ENCODE measurements at regions of chr5 and their contacts with region 1.

Region 1: GRCh38 chr5:11046160-11046559 is 285.1 kb upstream of the DAP start:
- DNase-seq: peak in 1 of 2 experiments; percentile 50
- H3K4me3 ChIP-seq: no peak overlapping the region
- H3K27ac ChIP-seq: no peak overlapping the region
- H3K4me1 ChIP-seq: peaks cover 0 to 3% (median 0%) of the 10 kb centered on the region in 4 experiments; a peak in 1 of 7 replicates
- H3K27me3 ChIP-seq: no peaks in the 10 kb centered on the region
- CTCF ChIP-seq: peak; percentile 27 to 52 (median 48)
- EP300 ChIP-seq: no peak
- POLR2A ChIP-seq: no peak
- RAD21 ChIP-seq: peak; percentile 59 to 64; a peak in 3 of 4 replicates

Region 2: GRCh38 chr5:11062397-11062796 is 16.2 kb after region 1 on chr5:
- CTCF ChIA-PET with region 1: interaction called, 10 read pairs
- POLR2A ChIA-PET with region 1: no interaction called
- DNase-seq: peak in 1 of 2 experiments; percentile 51
- H3K4me3 ChIP-seq: no peak overlapping the region
- H3K27ac ChIP-seq: no peak overlapping the region
- H3K4me1 ChIP-seq: no peaks in the 10 kb centered on the region; a peak in 1 of 7 replicates
- H3K27me3 ChIP-seq: no peaks in the 10 kb centered on the region
- CTCF ChIP-seq: no peak
- EP300 ChIP-seq: no peak
- POLR2A ChIP-seq: no peak
- RAD21 ChIP-seq: peak in 1 of 2 experiments; percentile 9; a peak in 1 of 4 replicates

Measured in H1 (cell line).